HEK293T (cell line): ENCODE measurements at regions of chr4 and their contacts with region 1.

Region 1: GRCh38 chr4:65893271-65893670 is 223.0 kb upstream of the EPHA5 start:
- DNase-seq: no peak

Region 2: DNA sequence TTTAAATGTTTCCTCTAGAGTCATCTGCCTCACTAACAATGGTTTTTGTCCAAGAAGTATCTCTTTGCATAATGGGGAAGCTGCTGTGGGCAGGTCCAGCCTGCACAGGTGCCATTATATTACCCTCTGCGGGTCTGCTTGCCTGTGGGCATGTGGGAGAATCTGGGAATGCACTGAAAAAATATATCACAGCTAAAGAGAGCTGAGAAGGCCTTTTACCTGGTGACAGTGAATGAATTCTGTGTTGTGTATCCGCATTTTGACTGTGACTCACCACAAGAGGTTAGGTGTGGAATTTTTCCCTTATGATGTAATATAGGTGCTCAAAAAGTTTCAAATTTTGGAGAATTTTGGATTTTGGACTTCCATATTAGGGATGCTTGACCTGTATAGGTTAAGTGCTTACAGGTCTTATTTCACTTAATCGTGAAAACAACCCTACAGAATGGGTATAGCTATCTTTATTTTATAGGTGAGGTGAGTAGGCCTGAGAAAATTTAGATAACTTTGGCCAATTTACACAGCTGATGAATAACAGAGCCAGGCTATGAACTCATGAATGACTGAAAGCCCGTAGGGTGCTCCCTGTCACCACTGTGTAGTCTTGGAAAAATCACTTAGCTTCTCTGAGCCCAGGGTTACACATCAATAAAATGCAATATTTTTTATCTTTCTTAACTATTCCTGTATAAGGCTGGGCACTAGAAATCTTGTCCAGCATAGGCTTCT is 25.0 kb before region 1 on chr4:
- CTCF ChIA-PET with region 1: interaction called, 10 read pairs
- POLR2A ChIA-PET with region 1: no interaction called
- DNase-seq: no peak

Region 3: GRCh38 chr4:66014146-66014765 is 121.0 kb after region 1 on chr4:
- CTCF ChIA-PET with region 1: no interaction called
- POLR2A ChIA-PET with region 1: no interaction called
- DNase-seq: no peak